ENCODE measurements at regions of chr10 and their contacts with region 1.

Region 1: GRCh38 chr10:28250782-28251181 is 52.1 kb downstream of the MPP7 start:
- DNase-seq: no peak
- H3K4me3 ChIP-seq: no peak overlapping the region
- H3K27ac ChIP-seq: no peak overlapping the region
- H3K4me1 ChIP-seq: no peaks in the 10 kb centered on the region
- H3K27me3 ChIP-seq: no peaks in the 10 kb centered on the region
- CTCF ChIP-seq: no peak; a peak in 1 of 4 replicates
- EP300 ChIP-seq: no peak
- POLR2A ChIP-seq: no peak
- RAD21 ChIP-seq: peak in 1 of 2 experiments; percentile 24; a peak in 2 of 4 replicates

Region 2: DNA sequence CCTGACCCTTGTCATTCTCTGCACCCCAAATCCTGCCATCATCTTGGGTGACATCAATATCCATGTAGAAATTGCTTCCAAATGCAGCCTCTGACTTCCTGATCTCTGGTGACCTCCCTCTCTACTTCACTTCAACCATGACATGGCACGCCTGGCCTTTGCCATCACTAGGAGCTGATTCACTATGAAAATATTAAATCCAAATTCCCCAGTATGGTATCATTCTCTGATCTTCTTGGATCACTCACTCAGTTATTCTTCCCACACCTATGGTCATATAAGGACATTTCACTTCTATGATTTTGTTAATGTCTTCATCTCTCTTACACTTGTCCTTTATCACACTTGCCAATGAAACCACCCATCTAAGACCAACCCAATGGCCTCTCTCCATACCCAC is 178.2 kb before region 1 on chr10:
- CTCF ChIA-PET with region 1: no interaction called
- POLR2A ChIA-PET with region 1: no interaction called
- DNase-seq: no peak
- H3K4me3 ChIP-seq: no peak overlapping the region
- H3K27ac ChIP-seq: no peak overlapping the region
- H3K4me1 ChIP-seq: no peaks in the 10 kb centered on the region
- H3K27me3 ChIP-seq: no peaks in the 10 kb centered on the region
- CTCF ChIP-seq: no peak
- EP300 ChIP-seq: no peak
- POLR2A ChIP-seq: no peak
- RAD21 ChIP-seq: no peak

Region 3: GRCh38 chr10:28326516-28327490 is 76.0 kb after region 1 on chr10:
- CTCF ChIA-PET with region 1: no interaction called
- POLR2A ChIA-PET with region 1: no interaction called
- DNase-seq: no peak
- H3K4me3 ChIP-seq: no peak overlapping the region
- H3K27ac ChIP-seq: no peak overlapping the region
- H3K4me1 ChIP-seq: peaks cover 0 to 10% (median 1%) of the 10 kb centered on the region in 4 experiments; a peak in 3 of 7 replicates
- H3K27me3 ChIP-seq: no peaks in the 10 kb centered on the region
- CTCF ChIP-seq: no peak
- EP300 ChIP-seq: no peak
- POLR2A ChIP-seq: no peak
- RAD21 ChIP-seq: no peak

Region 4: DNA sequence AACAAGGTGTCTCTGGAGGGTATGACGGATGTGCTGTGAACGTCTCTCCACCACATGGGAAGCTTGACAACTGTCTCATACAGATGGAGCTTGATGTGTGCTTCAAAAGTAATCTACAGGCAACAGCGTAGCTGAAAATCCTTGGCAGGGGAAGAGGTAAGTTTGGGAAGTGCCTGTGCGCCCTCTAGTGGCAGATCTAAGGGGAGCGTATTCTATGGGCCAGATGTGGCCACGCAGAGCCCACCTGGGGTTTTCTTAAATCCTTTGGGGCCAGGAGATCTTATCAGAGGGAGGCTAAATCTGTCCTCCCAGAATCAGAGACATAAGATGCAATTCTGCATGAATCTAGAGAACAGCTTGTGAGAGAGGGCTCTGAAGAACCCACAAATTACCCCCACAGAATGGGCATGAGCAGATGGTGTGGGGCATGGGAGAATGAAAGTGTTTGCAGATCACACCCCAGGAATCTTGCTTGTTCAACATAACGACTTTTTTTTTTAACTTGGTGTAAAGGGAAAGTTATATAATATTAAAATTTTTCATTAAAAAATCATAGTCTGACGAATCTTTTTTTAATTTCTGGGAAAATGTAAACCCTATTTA is 143.3 kb after region 1 on chr10:
- CTCF ChIA-PET with region 1: interaction called, 11 read pairs
- POLR2A ChIA-PET with region 1: no interaction called
- DNase-seq: peak; percentile 41 to 84
- H3K4me3 ChIP-seq: no peak overlapping the region
- H3K27ac ChIP-seq: no peak overlapping the region
- H3K4me1 ChIP-seq: no peaks in the 10 kb centered on the region
- H3K27me3 ChIP-seq: no peaks in the 10 kb centered on the region
- CTCF ChIP-seq: peak; percentile 79 to 90 (median 86)
- EP300 ChIP-seq: no peak
- POLR2A ChIP-seq: no peak
- RAD21 ChIP-seq: peak; percentile 85 to 89